Left lung (tissue), 14 donors: ENCODE measurements at regions of chr12 and their contacts with region 1.

Region 1: GRCh38 chr12:116015525-116015924 is 262.0 kb downstream of the MED13L start:
- DNase-seq: peak in 1 of 4 donors; percentile 47
- ATAC-seq: peak; percentile 91
- H3K4me3 ChIP-seq: no peak overlapping the region
- H3K27ac ChIP-seq: no peak overlapping the region
- H3K4me1 ChIP-seq: peaks cover 0 to 7% of the 10 kb centered on the region in 2 donors
- H3K27me3 ChIP-seq: no peaks in the 10 kb centered on the region
- CTCF ChIP-seq: peak in 1 of 2 donors; percentile 38

Region 2: GRCh38 chr12:116236148-116236731 is 220.7 kb after region 1 on chr12:
- intact Hi-C with region 1: loop called in 1 of 2 experiments (anchors 10 kb)
- DNase-seq: peak in 2 of 4 donors; percentile 33 to 61
- ATAC-seq: peak; percentile 82
- H3K4me3 ChIP-seq: no peak overlapping the region
- H3K27ac ChIP-seq: peak overlapping the region in 1 of 2 donors; percentile 5
- H3K4me1 ChIP-seq: peaks cover 4 to 65% of the 10 kb centered on the region in 2 donors
- H3K27me3 ChIP-seq: no peaks in the 10 kb centered on the region
- CTCF ChIP-seq: peak in 1 of 2 donors; percentile 69

Region 3: DNA sequence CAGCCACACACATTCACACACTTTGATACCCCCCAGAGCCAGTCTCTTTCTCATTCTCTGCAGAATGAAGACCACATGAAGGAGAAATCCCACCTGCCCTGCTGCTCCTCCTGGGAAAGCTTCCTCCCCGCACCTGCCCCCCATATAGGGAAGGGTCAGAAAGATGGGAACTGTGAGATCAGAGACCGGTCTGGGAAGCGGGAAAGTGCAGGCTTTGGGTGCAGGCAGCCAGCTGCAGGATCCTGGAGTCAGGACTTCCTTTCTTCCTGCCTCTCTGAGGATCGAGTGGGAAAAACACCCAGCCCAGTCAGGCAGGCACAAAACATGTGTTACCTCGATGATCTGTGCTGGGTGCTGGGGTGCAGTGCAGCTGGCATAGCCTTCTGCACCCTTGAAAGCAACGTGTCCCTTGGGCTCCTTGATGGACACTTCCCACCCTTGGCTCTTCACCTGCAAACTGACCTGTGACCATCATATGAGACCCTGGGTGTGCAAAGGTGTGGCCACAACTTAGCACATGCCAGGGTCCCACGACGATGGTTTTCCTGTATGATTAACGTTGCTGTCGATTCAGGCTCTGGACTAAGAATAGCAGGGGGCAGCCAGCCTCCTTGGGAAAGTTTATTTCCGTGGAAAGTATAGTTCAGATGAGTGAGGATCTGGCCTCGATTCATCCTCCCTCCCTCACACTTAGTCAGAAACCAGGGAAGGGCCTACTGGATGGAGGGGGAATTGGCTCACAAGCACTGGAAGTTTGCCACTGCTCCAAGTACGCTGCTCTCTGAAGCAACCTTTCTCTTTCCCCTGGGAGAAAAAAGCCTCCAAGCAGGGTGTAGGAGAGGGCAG is 367.4 kb after region 1 on chr12:
- intact Hi-C with region 1: no loop called
- DNase-seq: peak in 3 of 4 donors; percentile 75 to 91 (median 80)
- ATAC-seq: peak; percentile 74
- H3K4me3 ChIP-seq: no peak overlapping the region
- H3K27ac ChIP-seq: peak overlapping the region in 1 of 2 donors; percentile 18
- H3K4me1 ChIP-seq: peaks cover 6 to 19% of the 10 kb centered on the region in 2 donors
- H3K27me3 ChIP-seq: no peaks in the 10 kb centered on the region
- CTCF ChIP-seq: peak in 1 of 2 donors; percentile 10